ENCODE measurements at regions of chr17 and their contacts with region 1.

Region 1: GRCh38 chr17:81261582-81262336 is 22.6 kb downstream of the NDUFAF8 start:
- DNase-seq: no peak
- H3K4me3 ChIP-seq: no peak overlapping the region
- H3K27ac ChIP-seq: no peak overlapping the region
- H3K4me1 ChIP-seq: no peaks in the 10 kb centered on the region
- H3K27me3 ChIP-seq: no peaks in the 10 kb centered on the region
- CTCF ChIP-seq: no peak

Region 2: DNA sequence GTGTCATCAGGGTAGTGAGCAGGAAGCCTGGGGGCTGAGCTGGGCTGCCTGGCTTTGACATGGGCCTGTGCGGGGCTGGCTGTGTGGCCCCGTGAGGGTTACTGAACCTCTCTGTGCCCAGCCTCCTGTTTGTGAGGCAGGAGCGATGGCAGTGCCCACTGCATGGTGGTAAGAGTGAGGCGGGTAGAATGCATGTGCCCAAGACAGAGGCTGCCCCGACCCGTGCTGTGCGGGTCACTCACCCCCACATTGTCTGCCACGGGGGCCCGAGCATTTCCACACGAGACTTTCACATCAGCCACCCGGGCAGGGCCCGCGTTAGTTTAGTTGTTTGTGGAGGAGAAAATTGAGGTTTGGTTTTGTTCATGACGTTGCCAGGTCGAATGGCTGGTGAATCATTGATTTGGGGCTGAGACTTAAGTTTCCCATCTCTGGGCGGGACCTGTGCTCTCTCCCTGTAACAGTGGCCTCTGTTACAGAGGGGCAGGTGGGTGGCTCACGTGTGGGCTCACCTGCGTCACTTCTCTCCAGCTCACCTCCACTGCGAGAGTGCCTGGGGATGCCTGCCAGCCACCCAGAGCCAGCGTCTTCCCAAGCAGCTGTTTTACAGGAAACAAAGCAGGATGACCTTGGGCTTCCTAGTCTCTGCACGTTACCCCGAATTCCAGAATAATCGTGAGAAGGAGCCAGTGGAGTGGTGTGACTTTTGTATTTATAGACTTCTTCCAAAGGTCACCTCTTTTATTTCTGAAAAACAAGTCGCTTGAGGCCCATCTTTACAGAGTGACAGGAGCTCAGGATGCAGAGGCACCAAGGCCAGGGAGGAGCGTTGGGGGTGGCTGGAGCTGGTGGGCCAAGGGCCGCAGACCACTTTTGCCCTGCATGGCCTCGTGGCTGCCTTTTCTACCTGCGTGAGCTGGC is 566.5 kb before region 1 on chr17:
- intact Hi-C with region 1: loop called (anchors 5 kb)
- DNase-seq: no peak
- H3K4me3 ChIP-seq: no peak overlapping the region
- H3K27ac ChIP-seq: no peak overlapping the region
- H3K4me1 ChIP-seq: no peaks in the 10 kb centered on the region
- H3K27me3 ChIP-seq: no peaks in the 10 kb centered on the region
- CTCF ChIP-seq: no peak

Region 3: GRCh38 chr17:81090361-81091136 is 171.2 kb before region 1 on chr17:
- intact Hi-C with region 1: no loop called
- DNase-seq: peak; percentile 74 to 79
- H3K4me3 ChIP-seq: no peak overlapping the region
- H3K27ac ChIP-seq: no peak overlapping the region
- H3K4me1 ChIP-seq: peaks cover 0 to 14% (median 12%) of the 10 kb centered on the region in 4 donors
- H3K27me3 ChIP-seq: no peaks in the 10 kb centered on the region
- CTCF ChIP-seq: no peak

Region 4: GRCh38 chr17:81207610-81208581 is 53.9 kb before region 1 on chr17:
- intact Hi-C with region 1: no loop called
- DNase-seq: no peak
- H3K4me3 ChIP-seq: no peak overlapping the region
- H3K27ac ChIP-seq: peak overlapping the region in 1 of 2 donors; percentile 52
- H3K4me1 ChIP-seq: peaks cover 0 to 45% (median 20%) of the 10 kb centered on the region in 4 donors
- H3K27me3 ChIP-seq: no peaks in the 10 kb centered on the region
- CTCF ChIP-seq: no peak

Region 5: GRCh38 chr17:81346090-81346907 is 84.5 kb after region 1 on chr17:
- intact Hi-C with region 1: no loop called
- DNase-seq: peak; percentile 99
- H3K4me3 ChIP-seq: peak overlapping the region; percentile 69 to 77
- H3K27ac ChIP-seq: peak overlapping the region; percentile 86 to 92
- H3K4me1 ChIP-seq: peaks cover 0 to 40% (median 26%) of the 10 kb centered on the region in 4 donors
- H3K27me3 ChIP-seq: peaks cover 0 to 4% of the 10 kb centered on the region in 2 donors
- CTCF ChIP-seq: no peak

Region 6: GRCh38 chr17:81870117-81870977 is 608.6 kb after region 1 on chr17:
- intact Hi-C with region 1: no loop called
- DNase-seq: no peak
- H3K4me3 ChIP-seq: peak overlapping the region; percentile 61 to 94
- H3K27ac ChIP-seq: peak overlapping the region; percentile 87 to 97
- H3K4me1 ChIP-seq: peaks cover 0 to 59% (median 32%) of the 10 kb centered on the region in 4 donors
- H3K27me3 ChIP-seq: no peaks in the 10 kb centered on the region
- CTCF ChIP-seq: no peak

Measured in tibial artery (tissue), 4 donors.